ENCODE measurements at regions of chr14 and their contacts with region 1.

Region 1: DNA sequence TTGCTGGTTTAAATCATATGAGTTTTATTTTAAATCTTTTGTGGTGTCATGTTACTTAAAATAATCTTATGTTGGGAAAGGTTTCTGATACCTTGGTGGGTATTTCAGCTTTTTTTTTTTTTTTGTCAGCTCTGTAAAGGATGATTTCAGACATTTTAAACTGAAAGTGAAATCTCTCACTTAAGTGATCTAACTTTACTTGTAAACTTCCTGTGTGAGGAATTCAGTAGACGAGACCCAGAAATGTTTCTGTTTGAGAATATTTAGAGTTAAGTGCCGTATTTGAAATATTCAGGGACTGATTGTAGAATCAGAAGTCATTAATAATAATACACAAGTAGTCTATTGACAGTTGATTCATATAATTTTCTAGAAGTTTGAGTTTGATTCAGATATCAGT is 37.8 kb downstream of the PROX2 start:
- DNase-seq: peak in 7 of 9 donors; percentile 34 to 62 (median 46)
- ATAC-seq: peak; percentile 75
- H3K4me3 ChIP-seq: no peak overlapping the region
- H3K4me3 Mint-ChIP-seq: peak overlapping the region; percentile 30 to 87 (median 82)
- H3K27ac ChIP-seq: peak overlapping the region; percentile 72
- H3K27ac Mint-ChIP-seq: peak overlapping the region; percentile 80 to 99 (median 95)
- H3K4me1 ChIP-seq: peaks cover 48 to 65% of the 10 kb centered on the region in 2 donors
- H3K4me1 Mint-ChIP-seq: peaks cover 47 to 94% (median 86%) of the 10 kb centered on the region in 7 donors
- H3K27me3 ChIP-seq: no peaks in the 10 kb centered on the region
- H3K27me3 Mint-ChIP-seq: no peaks in the 10 kb centered on the region

Region 2: DNA sequence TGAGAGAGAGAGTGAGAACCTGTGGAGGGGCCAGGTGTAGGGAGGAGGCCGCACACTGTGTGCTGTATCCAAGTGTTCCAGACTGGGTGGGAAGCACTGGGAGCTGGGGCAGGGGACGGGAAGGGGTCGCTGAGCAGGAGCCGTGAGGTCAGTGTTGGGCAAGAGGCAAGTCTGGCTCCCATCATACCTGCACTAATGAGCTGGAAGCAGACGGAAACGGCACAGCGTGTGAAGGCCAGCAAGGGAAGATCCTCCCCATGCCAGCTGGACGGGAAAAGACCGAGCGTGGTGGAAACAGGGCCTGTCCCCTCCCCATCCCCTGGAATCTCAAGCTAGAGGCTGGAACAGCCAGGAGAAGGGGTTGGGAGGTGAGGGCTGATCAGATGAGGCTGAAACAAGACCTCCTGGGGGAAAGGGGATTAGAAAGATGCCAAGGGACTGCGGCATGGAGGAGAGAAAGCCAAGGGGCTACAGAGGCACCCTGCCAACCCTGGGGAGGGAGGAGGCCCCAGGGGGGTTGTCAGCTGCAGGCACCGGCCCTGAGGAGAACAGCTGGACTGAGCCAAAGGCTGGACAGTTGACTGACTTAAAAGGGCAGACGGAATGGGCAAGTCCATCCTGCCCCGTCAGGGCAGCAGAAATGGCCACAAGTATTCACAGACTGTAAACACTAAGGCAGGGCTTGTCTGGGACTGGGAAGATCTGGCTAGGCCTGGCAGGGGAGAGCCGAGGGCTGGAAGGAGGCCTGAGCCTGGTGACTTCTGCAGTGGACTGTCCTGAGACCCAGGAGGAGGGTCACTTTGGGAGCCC is 207.1 kb before region 1 on chr14:
- CTCF ChIA-PET with region 1: no interaction called
- POLR2A ChIA-PET with region 1: no interaction called
- intact Hi-C with region 1: no loop called
- DNase-seq: no peak
- ATAC-seq: no peak
- H3K4me3 ChIP-seq: no peak overlapping the region
- H3K4me3 Mint-ChIP-seq: no peak overlapping the region
- H3K27ac ChIP-seq: no peak overlapping the region
- H3K27ac Mint-ChIP-seq: no peak overlapping the region
- H3K4me1 ChIP-seq: no peaks in the 10 kb centered on the region
- H3K4me1 Mint-ChIP-seq: peaks cover 0 to 3% (median 0%) of the 10 kb centered on the region in 7 donors
- H3K27me3 ChIP-seq: no peaks in the 10 kb centered on the region
- H3K27me3 Mint-ChIP-seq: peaks cover 0 to 11% (median 0%) of the 10 kb centered on the region in 5 donors

Region 3: GRCh38 chr14:74852927-74853514 is 14.9 kb after region 1 on chr14:
- CTCF ChIA-PET with region 1: interaction called, 5 read pairs
- POLR2A ChIA-PET with region 1: interaction called, 4 read pairs
- intact Hi-C with region 1: loop called in 1 of 2 experiments (anchors 2 kb)
- DNase-seq: no peak
- ATAC-seq: peak; percentile 41
- H3K4me3 ChIP-seq: no peak overlapping the region
- H3K4me3 Mint-ChIP-seq: peak overlapping the region in 5 of 10 donors; percentile 16 to 50 (median 21)
- H3K27ac ChIP-seq: no peak overlapping the region
- H3K27ac Mint-ChIP-seq: peak overlapping the region; percentile 12 to 89 (median 45)
- H3K4me1 ChIP-seq: peaks cover 0 to 20% of the 10 kb centered on the region in 2 donors
- H3K4me1 Mint-ChIP-seq: peaks cover 13 to 41% (median 30%) of the 10 kb centered on the region in 7 donors
- H3K27me3 ChIP-seq: no peaks in the 10 kb centered on the region
- H3K27me3 Mint-ChIP-seq: no peaks in the 10 kb centered on the region